Dendritic cell treated with granulocyte-macrophage colony-stimulating factor and Interleukin-4, amounts not matched to agents 40 ng/mL and 50 ng/mL, for 4 days (primary cell): ENCODE measurements at regions of chr9 and their contacts with region 1.

Region 1: DNA sequence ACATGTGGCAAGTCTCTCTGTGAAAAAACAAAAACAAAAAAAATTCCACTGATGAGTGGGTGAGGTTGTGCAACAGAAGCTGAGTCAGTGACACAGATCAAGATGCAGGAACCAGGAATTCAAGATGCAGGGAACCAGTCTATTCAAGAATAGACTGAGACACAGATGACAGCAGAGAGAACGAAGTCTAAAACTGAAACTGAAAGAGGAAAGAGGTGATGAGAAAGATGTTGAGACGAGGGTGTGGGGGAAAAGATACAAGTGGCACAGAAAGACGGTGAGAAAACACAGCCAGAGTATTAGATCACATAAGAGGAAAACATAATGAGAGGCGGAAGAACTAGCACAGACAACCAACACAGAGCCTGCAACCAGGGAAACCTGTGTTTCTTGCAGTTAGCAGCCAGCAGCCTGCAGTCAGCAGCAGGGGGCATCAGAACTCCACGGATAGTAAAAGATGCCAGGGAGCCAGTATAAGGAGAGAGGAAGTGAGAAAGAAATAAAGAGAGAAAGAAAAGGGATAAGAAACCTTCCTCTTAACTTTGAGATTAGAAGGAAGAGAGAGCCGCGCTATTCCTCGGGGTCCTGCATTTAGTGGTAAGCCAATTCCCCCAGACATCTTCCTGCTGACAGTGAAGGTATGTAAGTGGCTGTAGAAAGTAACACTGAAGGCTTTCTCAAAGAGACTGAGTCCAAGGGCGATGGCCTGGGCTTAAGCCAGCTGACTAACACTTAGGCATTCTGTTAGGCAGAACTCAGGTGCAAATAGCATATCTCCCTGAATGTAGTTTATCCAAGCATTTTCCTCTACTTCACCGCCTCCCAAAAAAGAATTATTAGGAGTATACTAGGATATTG is 79.0 kb downstream of the TLR4 start:
- H3K4me3 Mint-ChIP-seq: no peak overlapping the region
- H3K27ac Mint-ChIP-seq: no peak overlapping the region
- H3K4me1 Mint-ChIP-seq: peaks cover 39% of the 10 kb centered on the region
- H3K27me3 Mint-ChIP-seq: peaks cover 2% of the 10 kb centered on the region

Region 2: GRCh38 chr9:117644133-117644931 is 138.8 kb before region 1 on chr9:
- intact Hi-C with region 1: loop called (anchors 1 kb)
- H3K4me3 Mint-ChIP-seq: peak overlapping the region; percentile 53
- H3K27ac Mint-ChIP-seq: peak overlapping the region; percentile 36
- H3K4me1 Mint-ChIP-seq: peaks cover 30% of the 10 kb centered on the region
- H3K27me3 Mint-ChIP-seq: peaks cover 32% of the 10 kb centered on the region

Region 3: DNA sequence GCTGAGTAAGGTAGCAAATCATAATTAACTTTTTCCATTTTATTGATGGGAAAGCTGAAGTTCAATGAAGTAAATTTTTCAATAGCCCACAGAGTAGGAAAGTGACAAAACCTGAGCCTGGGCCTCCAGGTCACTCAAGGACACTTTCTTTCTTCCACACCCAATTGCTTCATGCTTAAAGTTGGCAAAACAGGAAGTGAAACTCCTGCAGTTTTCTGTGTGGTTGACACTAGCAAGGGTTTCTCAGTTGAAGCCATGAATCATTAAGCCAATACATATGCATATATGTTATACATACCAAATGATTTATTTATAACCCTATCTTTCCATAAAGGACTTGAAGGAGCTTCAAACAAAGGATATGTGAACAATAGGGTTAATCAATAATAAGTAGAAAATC is 65.1 kb before region 1 on chr9:
- intact Hi-C with region 1: loop called (anchors 5 kb)
- H3K4me3 Mint-ChIP-seq: no peak overlapping the region
- H3K27ac Mint-ChIP-seq: peak overlapping the region; percentile 79
- H3K4me1 Mint-ChIP-seq: peaks cover 70% of the 10 kb centered on the region
- H3K27me3 Mint-ChIP-seq: no peaks in the 10 kb centered on the region

Region 4: DNA sequence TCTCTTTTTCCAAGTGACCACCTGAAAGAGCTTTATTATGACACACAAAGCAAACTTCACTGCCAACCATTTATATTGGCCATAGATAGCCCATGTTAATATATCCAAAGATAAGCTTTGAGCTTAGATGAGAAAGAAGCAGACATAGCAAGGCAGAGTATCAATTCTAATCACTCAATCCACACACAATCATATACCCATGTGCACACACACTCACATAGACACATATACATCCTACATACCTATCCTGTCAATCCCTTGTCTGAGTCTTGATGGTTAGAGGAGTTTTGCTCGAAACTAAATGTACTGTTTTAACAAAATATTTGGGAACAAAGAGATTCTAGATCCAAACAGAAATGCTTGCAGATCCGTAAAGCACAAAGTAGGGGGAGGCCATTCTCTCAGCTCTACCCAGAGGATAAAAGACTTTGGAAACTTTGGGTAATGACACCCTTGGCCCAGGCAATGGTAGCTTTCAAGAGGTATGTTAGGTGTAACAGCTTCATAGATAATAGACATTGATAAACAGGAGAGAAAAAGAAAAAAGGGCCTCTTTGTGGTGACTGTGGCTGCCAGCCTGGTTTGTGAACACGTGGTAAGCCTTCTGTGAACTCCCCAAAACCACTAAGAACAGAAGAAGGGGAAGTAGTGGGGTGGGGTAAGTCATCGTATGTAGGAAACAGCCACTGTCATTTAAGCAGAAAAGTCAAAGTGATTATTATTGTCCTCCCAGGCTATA is 42.6 kb after region 1 on chr9:
- intact Hi-C with region 1: loop called (anchors 5 kb)
- H3K4me3 Mint-ChIP-seq: peak overlapping the region; percentile 26
- H3K27ac Mint-ChIP-seq: peak overlapping the region; percentile 89
- H3K4me1 Mint-ChIP-seq: peaks cover 46% of the 10 kb centered on the region
- H3K27me3 Mint-ChIP-seq: no peaks in the 10 kb centered on the region

Region 5: GRCh38 chr9:117835798-117836197 is 52.6 kb after region 1 on chr9:
- intact Hi-C with region 1: no loop called
- H3K4me3 Mint-ChIP-seq: no peak overlapping the region
- H3K27ac Mint-ChIP-seq: no peak overlapping the region
- H3K4me1 Mint-ChIP-seq: peaks cover 11% of the 10 kb centered on the region
- H3K27me3 Mint-ChIP-seq: peaks cover 3% of the 10 kb centered on the region

Region 6: GRCh38 chr9:117853442-117853841 is 70.3 kb after region 1 on chr9:
- intact Hi-C with region 1: no loop called
- H3K4me3 Mint-ChIP-seq: no peak overlapping the region
- H3K27ac Mint-ChIP-seq: no peak overlapping the region
- H3K4me1 Mint-ChIP-seq: peaks cover 13% of the 10 kb centered on the region
- H3K27me3 Mint-ChIP-seq: peaks cover 3% of the 10 kb centered on the region

Region 7: GRCh38 chr9:117917873-117918272 is 134.7 kb after region 1 on chr9:
- intact Hi-C with region 1: no loop called
- H3K4me3 Mint-ChIP-seq: no peak overlapping the region
- H3K27ac Mint-ChIP-seq: no peak overlapping the region
- H3K4me1 Mint-ChIP-seq: no peaks in the 10 kb centered on the region
- H3K27me3 Mint-ChIP-seq: peaks cover 3% of the 10 kb centered on the region

Region 8: DNA sequence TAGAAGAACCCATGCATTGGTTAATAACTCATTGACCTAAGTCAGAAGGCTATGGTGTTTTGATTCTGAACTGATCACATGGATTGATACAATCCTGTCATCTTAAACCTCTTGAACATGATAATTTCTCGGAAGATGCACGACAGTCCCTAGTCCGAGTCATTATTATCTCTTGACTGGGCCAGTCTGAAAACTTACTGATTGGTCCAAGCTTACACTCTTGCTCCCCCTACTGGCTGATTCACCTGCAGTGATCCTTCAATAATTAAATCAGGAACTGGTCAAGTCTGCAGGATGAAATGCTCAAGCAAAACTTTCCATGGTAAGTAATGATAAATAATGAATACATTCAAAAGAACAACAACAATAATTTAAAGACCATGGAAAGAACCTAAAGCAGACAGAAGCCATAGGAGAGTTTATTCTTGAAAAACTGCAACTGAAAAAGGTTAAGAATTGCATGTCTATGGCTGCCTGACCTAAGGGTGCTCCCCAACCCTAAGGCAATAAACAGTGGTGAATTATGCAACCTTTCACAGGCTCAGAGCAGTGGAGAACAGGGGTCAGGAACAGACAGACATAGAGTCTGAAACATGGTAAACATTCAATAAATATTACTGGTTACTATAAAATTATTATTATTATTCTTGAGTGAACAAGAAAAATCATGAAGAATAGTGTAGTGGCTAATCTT is 1506.7 kb after region 1 on chr9:
- intact Hi-C with region 1: loop called (anchors 1 kb)
- H3K4me3 Mint-ChIP-seq: no peak overlapping the region
- H3K27ac Mint-ChIP-seq: no peak overlapping the region
- H3K4me1 Mint-ChIP-seq: no peaks in the 10 kb centered on the region
- H3K27me3 Mint-ChIP-seq: peaks cover 4% of the 10 kb centered on the region